ENCODE measurements at regions of chr19 and their contacts with region 1.

Region 1: DNA sequence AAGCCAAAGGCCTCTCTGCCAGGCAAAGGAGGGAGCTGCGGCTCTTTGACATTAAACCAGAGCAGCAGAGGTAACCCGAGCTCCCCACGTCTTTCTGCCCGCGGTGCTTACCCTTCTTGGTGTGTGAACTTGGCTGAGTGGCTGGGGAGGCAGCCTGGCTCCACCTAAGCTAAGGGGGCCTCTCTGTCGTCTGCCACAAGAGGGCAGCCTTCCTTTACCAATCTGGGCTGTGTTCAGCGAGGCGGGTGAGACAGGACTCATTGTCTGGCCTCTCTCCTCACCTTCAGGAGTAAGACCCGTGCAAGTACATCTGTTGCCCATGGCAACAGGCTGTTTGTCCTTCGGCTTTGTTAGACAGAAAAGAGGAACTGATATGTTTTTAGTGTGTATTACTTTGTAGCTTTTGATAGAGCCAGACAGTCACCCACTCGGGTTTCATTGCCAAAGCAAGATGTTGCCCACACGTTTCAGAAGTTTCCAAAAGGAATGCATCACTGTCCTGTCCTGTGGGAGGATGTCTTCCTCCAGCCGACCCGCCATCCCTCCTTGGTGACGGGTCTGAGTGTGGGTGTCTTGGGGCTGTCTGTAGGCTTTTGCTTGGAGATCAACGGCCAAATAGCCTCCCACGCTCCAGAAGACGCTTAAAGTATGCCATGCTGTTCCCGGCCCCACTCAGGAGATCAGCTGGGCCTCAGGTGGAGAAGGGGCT is 4.6 kb downstream of the POP4 start:
- DNase-seq: peak; percentile 81 to 85 (median 82)
- H3K4me3 ChIP-seq: no peak overlapping the region
- H3K4me3 Mint-ChIP-seq: no peak overlapping the region
- H3K27ac ChIP-seq: no peak overlapping the region
- H3K27ac Mint-ChIP-seq: peak overlapping the region; percentile 1 to 90 (median 83)
- H3K4me1 ChIP-seq: peaks cover 22% of the 10 kb centered on the region
- H3K4me1 Mint-ChIP-seq: peaks cover 14 to 45% (median 28%) of the 10 kb centered on the region in 4 donors
- H3K27me3 ChIP-seq: no peaks in the 10 kb centered on the region
- H3K27me3 Mint-ChIP-seq: no peaks in the 10 kb centered on the region

Region 2: DNA sequence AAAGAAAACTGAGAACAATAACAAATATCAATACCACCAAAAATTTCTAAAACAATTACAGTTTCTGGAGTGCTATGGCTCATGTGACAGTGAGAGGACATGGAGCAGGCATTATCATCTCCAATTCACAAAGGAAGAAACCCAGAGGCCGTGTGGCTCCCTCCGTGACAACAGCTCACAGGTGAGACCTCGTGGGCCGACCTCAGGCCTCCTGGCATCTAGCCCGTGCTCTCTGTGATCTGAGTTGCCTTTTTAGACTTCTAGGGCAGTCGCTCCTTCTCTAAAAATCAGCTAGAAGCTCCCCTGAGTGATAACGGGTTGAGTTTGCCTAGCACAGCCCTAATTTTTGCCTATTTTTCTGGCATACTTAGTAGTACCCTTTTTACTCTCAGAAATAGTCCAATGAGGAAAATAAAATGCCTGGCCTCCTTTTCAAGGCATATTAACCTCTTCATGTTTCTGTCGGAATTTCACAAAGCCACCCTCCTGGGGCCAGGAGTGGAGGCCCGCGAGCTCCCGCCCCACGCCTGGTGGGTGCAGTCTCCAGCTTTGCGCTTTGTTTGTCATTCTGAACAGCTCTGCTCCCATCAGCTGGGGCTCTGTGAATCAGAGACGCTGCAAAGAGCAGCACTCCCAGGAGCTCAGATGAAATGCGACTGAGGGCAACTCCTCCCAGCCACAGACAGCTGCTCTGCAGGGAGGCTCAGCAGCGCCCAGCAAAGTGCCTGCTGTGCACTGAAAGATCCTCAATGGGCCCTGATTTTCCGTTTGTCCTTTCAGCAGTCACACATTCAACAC is 690.2 kb before region 1 on chr19:
- CTCF ChIA-PET with region 1: no interaction called
- POLR2A ChIA-PET with region 1: no interaction called
- intact Hi-C with region 1: no loop called
- DNase-seq: no peak
- H3K4me3 ChIP-seq: no peak overlapping the region
- H3K4me3 Mint-ChIP-seq: no peak overlapping the region
- H3K27ac ChIP-seq: no peak overlapping the region
- H3K27ac Mint-ChIP-seq: no peak overlapping the region
- H3K4me1 ChIP-seq: no peaks in the 10 kb centered on the region
- H3K4me1 Mint-ChIP-seq: no peaks in the 10 kb centered on the region
- H3K27me3 ChIP-seq: no peaks in the 10 kb centered on the region
- H3K27me3 Mint-ChIP-seq: peaks cover under 1 to 6% of the 10 kb centered on the region in 2 donors

Region 3: GRCh38 chr19:29587518-29587986 is 23.2 kb before region 1 on chr19:
- CTCF ChIA-PET with region 1: interaction called, 3 read pairs
- POLR2A ChIA-PET with region 1: interaction called, 13 read pairs
- intact Hi-C with region 1: no loop called
- DNase-seq: peak; percentile 38 to 79 (median 52)
- H3K4me3 ChIP-seq: no peak overlapping the region
- H3K4me3 Mint-ChIP-seq: no peak overlapping the region
- H3K27ac ChIP-seq: no peak overlapping the region
- H3K27ac Mint-ChIP-seq: peak overlapping the region in 6 of 7 donors; percentile 19 to 88 (median 63)
- H3K4me1 ChIP-seq: peaks cover 10% of the 10 kb centered on the region
- H3K4me1 Mint-ChIP-seq: peaks cover 6 to 11% (median 9%) of the 10 kb centered on the region in 4 donors
- H3K27me3 ChIP-seq: no peaks in the 10 kb centered on the region
- H3K27me3 Mint-ChIP-seq: peaks cover 15 to 21% of the 10 kb centered on the region in 2 donors

Region 4: DNA sequence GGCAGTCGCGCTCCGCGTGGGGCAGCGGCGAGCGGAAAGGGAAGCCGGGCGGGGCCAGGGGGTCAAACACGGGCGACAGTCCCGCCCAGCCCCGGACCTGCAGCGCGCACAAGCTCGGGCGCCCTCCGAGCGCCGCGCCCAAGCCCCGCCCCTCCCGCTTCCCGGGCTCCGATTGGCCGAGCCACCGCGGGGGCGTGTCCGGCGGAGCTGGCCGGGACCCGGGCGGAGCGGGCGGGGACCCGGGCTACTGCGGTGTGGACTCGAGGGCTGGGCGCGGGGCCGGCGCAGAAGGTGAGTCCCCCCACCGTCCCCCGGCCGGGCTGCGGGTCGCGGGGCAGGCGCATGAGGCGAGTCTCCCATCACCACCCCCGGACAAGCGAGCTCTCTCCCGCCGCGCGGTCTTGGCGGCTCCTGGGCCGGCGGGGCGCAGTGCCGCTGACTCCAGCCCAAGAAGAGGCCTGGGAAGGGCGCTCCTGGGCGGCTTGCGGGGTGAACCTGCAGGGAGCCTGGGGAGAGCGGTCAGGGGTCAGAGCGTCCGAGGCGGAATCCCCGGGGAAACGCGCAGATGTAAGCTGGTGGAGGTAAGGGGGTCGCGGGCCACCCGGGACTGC is 54.6 kb after region 1 on chr19 and contains the start of gene PLEKHF1:
- CTCF ChIA-PET with region 1: interaction called, 154 read pairs
- POLR2A ChIA-PET with region 1: interaction called, 163 read pairs
- intact Hi-C with region 1: loop called (anchors 1 kb)
- DNase-seq: peak; percentile 73 to 88 (median 78)
- H3K4me3 ChIP-seq: peak within 1 kb of the TSS; percentile 77 to 83
- H3K4me3 Mint-ChIP-seq: peak within 1 kb of the TSS; percentile 89 to 98 (median 93)
- H3K27ac ChIP-seq: peak within 1 kb of the TSS; percentile 92
- H3K27ac Mint-ChIP-seq: peak within 1 kb of the TSS; percentile 92 to 100 (median 96)
- H3K4me1 ChIP-seq: peaks cover 42% of the 10 kb centered on the region
- H3K4me1 Mint-ChIP-seq: peaks cover 24 to 62% (median 38%) of the 10 kb centered on the region in 4 donors
- H3K27me3 ChIP-seq: no peaks in the 10 kb centered on the region
- H3K27me3 Mint-ChIP-seq: no peaks in the 10 kb centered on the region
- total RNA-seq, gene PLEKHF1: 31.2 to 32.4 TPM

Region 5: GRCh38 chr19:29680447-29680846 is 69.7 kb after region 1 on chr19:
- CTCF ChIA-PET with region 1: interaction called, 90 read pairs
- POLR2A ChIA-PET with region 1: interaction called, 40 read pairs
- intact Hi-C with region 1: no loop called
- DNase-seq: peak; percentile 81 to 88 (median 88)
- H3K4me3 ChIP-seq: peak overlapping the region in 1 of 2 donors; percentile 26
- H3K4me3 Mint-ChIP-seq: peak overlapping the region; percentile 71 to 88 (median 75)
- H3K27ac ChIP-seq: peak overlapping the region; percentile 49
- H3K27ac Mint-ChIP-seq: peak overlapping the region; percentile 85 to 96 (median 93)
- H3K4me1 ChIP-seq: peaks cover 76% of the 10 kb centered on the region
- H3K4me1 Mint-ChIP-seq: peaks cover 37 to 89% (median 67%) of the 10 kb centered on the region in 4 donors
- H3K27me3 ChIP-seq: no peaks in the 10 kb centered on the region
- H3K27me3 Mint-ChIP-seq: no peaks in the 10 kb centered on the region

Region 6: DNA sequence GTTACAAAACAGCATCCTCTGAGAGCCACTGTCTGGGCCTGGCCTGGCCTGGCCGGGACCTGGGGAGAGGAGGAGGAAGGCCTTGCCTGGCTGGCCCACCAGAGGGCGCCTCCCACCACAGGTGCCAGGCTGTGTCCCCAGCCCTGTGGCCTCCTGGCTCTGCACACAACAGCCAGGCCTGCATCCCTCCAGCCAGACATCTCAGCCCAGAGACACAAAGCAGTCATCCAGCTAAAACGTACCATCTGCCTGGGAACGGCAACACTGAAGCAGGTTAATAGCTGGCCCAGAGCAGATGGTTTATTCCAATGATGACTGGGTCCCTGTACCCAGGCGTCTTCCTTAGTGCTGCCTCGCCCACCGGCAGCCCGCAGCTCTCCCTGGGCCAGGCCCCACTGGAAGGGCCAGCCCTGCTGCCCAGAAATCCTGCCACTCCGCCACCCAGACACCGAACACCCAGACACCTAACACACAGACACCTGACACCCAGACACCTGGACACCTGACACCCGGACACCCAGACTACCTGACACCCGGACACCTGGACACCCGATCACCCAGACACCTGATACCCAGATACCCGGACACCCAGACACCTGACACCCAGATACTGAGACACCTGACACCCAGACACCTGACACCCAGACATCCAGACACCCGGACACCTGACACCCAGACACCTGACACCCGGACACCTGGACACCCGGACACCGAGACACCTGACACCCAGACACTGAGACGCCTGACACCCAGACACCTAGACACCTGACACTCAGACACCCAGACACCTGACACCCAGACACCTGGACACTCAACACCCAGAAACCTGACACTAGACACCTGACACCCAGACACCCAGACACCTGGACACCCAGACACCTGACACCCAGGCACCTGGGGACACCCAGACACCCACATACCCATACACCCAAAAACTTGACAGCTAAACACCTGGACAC is 84.2 kb after region 1 on chr19:
- CTCF ChIA-PET with region 1: interaction called, 256 read pairs
- POLR2A ChIA-PET with region 1: interaction called, 23 read pairs
- intact Hi-C with region 1: loop called (anchors 1 kb)
- DNase-seq: peak; percentile 75 to 82 (median 78)
- H3K4me3 ChIP-seq: no peak overlapping the region
- H3K4me3 Mint-ChIP-seq: no peak overlapping the region
- H3K27ac ChIP-seq: no peak overlapping the region
- H3K27ac Mint-ChIP-seq: peak overlapping the region; percentile 58 to 89 (median 78)
- H3K4me1 ChIP-seq: peaks cover 12% of the 10 kb centered on the region
- H3K4me1 Mint-ChIP-seq: peaks cover 7 to 30% (median 12%) of the 10 kb centered on the region in 4 donors
- H3K27me3 ChIP-seq: no peaks in the 10 kb centered on the region
- H3K27me3 Mint-ChIP-seq: no peaks in the 10 kb centered on the region

Region 7: DNA sequence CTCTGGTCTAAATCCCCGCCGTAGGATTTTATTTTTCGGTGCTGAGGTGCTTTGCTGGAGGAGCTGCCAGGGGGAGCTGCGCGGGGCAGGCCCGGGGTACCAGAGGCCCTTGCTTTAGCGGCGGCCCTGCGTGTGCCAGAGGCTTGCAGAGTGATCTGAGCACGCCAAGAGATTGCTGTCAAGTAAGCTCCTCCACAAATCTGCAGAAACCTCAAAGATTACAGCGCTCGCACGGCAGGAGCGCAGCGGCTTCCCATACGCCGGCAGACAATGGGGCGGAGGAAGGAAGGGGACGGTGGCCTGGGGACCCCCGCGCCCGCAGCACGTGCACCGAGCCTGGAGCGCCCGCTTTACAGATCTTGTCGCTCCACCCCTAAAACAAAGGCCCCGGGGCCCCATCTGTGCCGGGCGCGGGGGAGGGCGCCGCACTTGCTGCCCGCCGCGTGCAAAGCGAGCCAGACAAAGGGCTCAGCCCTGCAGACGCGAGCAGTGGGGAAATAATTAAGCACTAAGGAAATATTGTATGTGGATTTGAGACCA is 113.5 kb after region 1 on chr19:
- CTCF ChIA-PET with region 1: interaction called, 267 read pairs
- POLR2A ChIA-PET with region 1: interaction called, 4 read pairs
- intact Hi-C with region 1: no loop called
- DNase-seq: peak in 3 of 5 donors; percentile 10 to 19 (median 15)
- H3K4me3 ChIP-seq: no peak overlapping the region
- H3K4me3 Mint-ChIP-seq: peak overlapping the region; percentile 29 to 77 (median 65)
- H3K27ac ChIP-seq: no peak overlapping the region
- H3K27ac Mint-ChIP-seq: peak overlapping the region in 1 of 7 donors; percentile 50
- H3K4me1 ChIP-seq: peaks cover 11% of the 10 kb centered on the region
- H3K4me1 Mint-ChIP-seq: peaks cover 4 to 11% (median 5%) of the 10 kb centered on the region in 4 donors
- H3K27me3 ChIP-seq: peaks cover 4% of the 10 kb centered on the region
- H3K27me3 Mint-ChIP-seq: peaks cover 11 to 29% of the 10 kb centered on the region in 2 donors

Region 8: GRCh38 chr19:29941828-29942403 is 331.2 kb after region 1 on chr19 and contains the start of gene URI1:
- CTCF ChIA-PET with region 1: interaction called, 3 read pairs
- POLR2A ChIA-PET with region 1: interaction called, 20 read pairs
- intact Hi-C with region 1: loop called (anchors 1 kb)
- DNase-seq: peak; percentile 88 to 95 (median 91)
- H3K4me3 ChIP-seq: peak within 1 kb of the TSS; percentile 88 to 93
- H3K4me3 Mint-ChIP-seq: peak within 1 kb of the TSS; percentile 95 to 99 (median 96)
- H3K27ac ChIP-seq: peak within 1 kb of the TSS; percentile 78
- H3K27ac Mint-ChIP-seq: peak within 1 kb of the TSS; percentile 78 to 98 (median 95)
- H3K4me1 ChIP-seq: peaks cover 50% of the 10 kb centered on the region
- H3K4me1 Mint-ChIP-seq: peaks cover 28 to 48% (median 39%) of the 10 kb centered on the region in 4 donors
- H3K27me3 ChIP-seq: no peaks in the 10 kb centered on the region
- H3K27me3 Mint-ChIP-seq: peaks cover 0 to 6% of the 10 kb centered on the region in 2 donors
- total RNA-seq, gene URI1: 91.7 to 95.0 TPM

Measured in CD4-positive, alpha-beta memory T cell (primary cell).